K562 (cell line): ENCODE measurements at regions of chr16 and their contacts with region 1.

Region 1: GRCh38 chr16:30636599-30636998 is 14.2 kb upstream of the PRR14 start:
- DNase-seq: no peak
- ATAC-seq: no peak
- H3K4me3 ChIP-seq: no peak overlapping the region
- H3K27ac ChIP-seq: no peak overlapping the region
- H3K4me1 ChIP-seq: peaks cover 0 to 23% of the 10 kb centered on the region in 2 experiments; a peak in 2 of 5 replicates
- H3K27me3 ChIP-seq: no peaks in the 10 kb centered on the region
- CTCF ChIP-seq: no peak
- EP300 ChIP-seq: no peak
- POLR2A ChIP-seq: no peak
- RAD21 ChIP-seq: no peak

Region 2: DNA sequence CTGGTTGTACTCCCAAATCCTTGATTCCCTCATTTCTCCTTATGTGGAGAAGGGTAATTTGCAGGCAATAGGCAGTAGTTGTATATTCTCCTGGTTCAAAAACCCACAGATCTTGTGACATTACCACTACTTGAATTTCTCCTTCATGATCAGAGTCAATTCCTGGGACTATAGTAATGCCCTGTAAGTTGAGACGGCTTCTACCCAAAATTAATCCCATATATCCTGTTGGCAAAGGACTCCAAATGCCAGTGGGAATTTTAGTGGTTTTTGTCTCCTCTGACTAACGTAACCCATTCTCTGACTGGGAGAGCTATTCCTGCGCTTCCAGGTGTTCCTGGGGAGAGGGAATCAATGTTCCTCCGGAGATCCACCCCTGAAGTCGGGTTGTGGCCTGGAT is 14.8 kb before region 1 on chr16:
- CTCF ChIA-PET with region 1: no interaction called
- POLR2A ChIA-PET with region 1: no interaction called
- in situ Hi-C with region 1: no loop called
- intact Hi-C with region 1: no loop called
- DNase-seq: no peak
- ATAC-seq: no peak
- H3K4me3 ChIP-seq: no peak overlapping the region
- H3K27ac ChIP-seq: no peak overlapping the region
- H3K4me1 ChIP-seq: peaks cover 6 to 7% of the 10 kb centered on the region in 2 experiments; a peak in 3 of 5 replicates
- H3K27me3 ChIP-seq: no peaks in the 10 kb centered on the region
- CTCF ChIP-seq: no peak
- EP300 ChIP-seq: no peak
- POLR2A ChIP-seq: no peak
- RAD21 ChIP-seq: no peak

Region 3: DNA sequence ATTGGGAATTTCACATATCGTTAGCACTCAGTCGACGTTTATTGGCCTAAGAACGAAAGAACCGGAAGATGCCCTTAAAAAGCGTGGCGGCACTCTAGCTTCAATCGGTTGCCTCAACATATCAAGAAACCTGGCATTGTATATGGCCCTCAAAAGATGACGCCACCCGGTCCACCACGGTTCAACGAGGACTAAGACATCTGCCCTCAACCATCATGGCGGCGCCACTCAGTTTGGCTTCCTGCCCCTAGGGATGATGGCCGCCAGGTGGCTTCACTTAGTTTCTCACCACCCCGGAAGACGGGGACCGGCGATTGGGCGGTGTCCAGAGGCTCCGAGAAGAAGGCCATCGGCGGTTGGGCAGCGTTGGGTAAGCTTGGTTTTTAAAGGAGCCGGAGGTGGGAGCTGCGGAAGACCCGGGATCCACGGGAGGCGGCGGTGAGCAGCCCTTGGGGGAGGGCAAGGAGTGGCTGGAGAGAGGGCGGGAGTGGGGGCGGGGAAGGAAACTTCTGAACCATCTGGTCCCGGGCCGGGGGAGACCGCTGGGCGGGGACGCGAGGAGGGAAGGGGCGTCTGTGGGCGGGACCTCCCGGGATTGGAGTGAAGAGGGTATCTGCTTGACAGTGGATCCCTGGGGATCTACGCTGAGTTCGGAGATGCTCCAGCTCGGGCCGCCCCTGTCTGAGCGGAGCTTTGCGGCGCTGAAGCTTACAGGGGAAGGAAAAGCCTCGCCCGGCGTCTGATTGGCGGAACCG is 13.9 kb after region 1 on chr16 and contains the start of gene PRR14:
- CTCF ChIA-PET with region 1: no interaction called
- POLR2A ChIA-PET with region 1: interaction called, 10 read pairs
- in situ Hi-C with region 1: no loop called
- intact Hi-C with region 1: no loop called
- DNase-seq: peak; percentile 93 to 100 (median 97)
- ATAC-seq: peak; percentile 94
- H3K4me3 ChIP-seq: peak within 1 kb of the TSS; percentile 98
- H3K27ac ChIP-seq: peak within 1 kb of the TSS; percentile 98
- H3K4me1 ChIP-seq: peaks cover 12 to 39% of the 10 kb centered on the region in 2 experiments; a peak in 4 of 5 replicates
- H3K27me3 ChIP-seq: no peaks in the 10 kb centered on the region
- CTCF ChIP-seq: peak in 2 of 3 experiments; percentile 31 to 32; a peak in 3 of 6 replicates
- EP300 ChIP-seq: no peak
- POLR2A ChIP-seq: peak; percentile 72; the same call in 1 of the 2 replicates
- RAD21 ChIP-seq: no peak
- polyA plus RNA-seq, gene PRR14: 2.2 to 2.3 TPM